Activated CD8-positive, alpha-beta memory T cell treated with anti-CD3 and anti-CD28 coated beads, Interleukin-2, amount 10 ng/mL, durations not matched to agents 7 days and 5 days (primary cell): ENCODE measurements at regions of chr14 and their contacts with region 1.

Region 1: GRCh38 chr14:106013879-106014376 is 487.5 kb downstream of the TMEM121 start:
- DNase-seq: no peak
- ATAC-seq: peak; percentile 72
- H3K4me3 Mint-ChIP-seq: no peak overlapping the region
- H3K27ac Mint-ChIP-seq: peak overlapping the region; percentile 22
- H3K4me1 Mint-ChIP-seq: peaks cover 33% of the 10 kb centered on the region
- H3K27me3 Mint-ChIP-seq: peaks cover 22% of the 10 kb centered on the region

Region 2: DNA sequence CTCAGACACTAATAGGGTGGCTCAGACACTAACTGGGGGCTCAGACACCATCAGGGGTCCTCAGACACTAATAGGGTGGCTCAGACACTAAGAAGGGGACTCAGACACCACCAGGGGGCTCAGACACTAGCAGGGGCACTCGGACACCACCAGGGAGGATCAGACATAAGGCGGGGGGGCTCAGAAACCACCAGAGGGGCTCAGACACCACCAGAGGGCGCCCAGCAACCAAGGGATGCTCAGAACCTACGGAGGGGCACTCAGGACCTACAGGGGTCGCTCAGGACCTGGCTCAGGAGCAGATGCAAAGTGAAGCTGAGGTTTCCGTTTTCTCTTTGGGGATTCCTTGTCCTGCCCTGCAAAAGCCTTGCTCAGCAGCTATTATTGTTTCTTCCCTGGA is 39.0 kb before region 1 on chr14:
- CTCF ChIA-PET with region 1: interaction called, 10 read pairs
- DNase-seq: peak; percentile 81
- ATAC-seq: peak; percentile 95
- H3K4me3 Mint-ChIP-seq: no peak overlapping the region
- H3K27ac Mint-ChIP-seq: no peak overlapping the region
- H3K4me1 Mint-ChIP-seq: no peaks in the 10 kb centered on the region
- H3K27me3 Mint-ChIP-seq: peaks cover 13% of the 10 kb centered on the region

Region 3: GRCh38 chr14:106024983-106025604 is 11.2 kb after region 1 on chr14:
- CTCF ChIA-PET with region 1: interaction called, 15 read pairs
- DNase-seq: peak; percentile 75
- ATAC-seq: peak; percentile 93
- H3K4me3 Mint-ChIP-seq: no peak overlapping the region
- H3K27ac Mint-ChIP-seq: no peak overlapping the region
- H3K4me1 Mint-ChIP-seq: peaks cover 34% of the 10 kb centered on the region
- H3K27me3 Mint-ChIP-seq: peaks cover 40% of the 10 kb centered on the region